ENCODE measurements at regions of chr7 and their contacts with region 1.

Region 1: GRCh38 chr7:126803060-126803665 is 449.6 kb downstream of the GRM8 start:
- DNase-seq: peak; percentile 53
- ATAC-seq: peak; percentile 98
- H3K4me3 ChIP-seq: no peak overlapping the region
- H3K27ac ChIP-seq: no peak overlapping the region
- H3K4me1 ChIP-seq: no peaks in the 10 kb centered on the region
- H3K27me3 ChIP-seq: no peaks in the 10 kb centered on the region
- CTCF ChIP-seq: peak; percentile 63 to 78 (median 73)
- EP300 ChIP-seq: no peak
- POLR2A ChIP-seq: no peak
- RAD21 ChIP-seq: peak; percentile 86

Region 2: DNA sequence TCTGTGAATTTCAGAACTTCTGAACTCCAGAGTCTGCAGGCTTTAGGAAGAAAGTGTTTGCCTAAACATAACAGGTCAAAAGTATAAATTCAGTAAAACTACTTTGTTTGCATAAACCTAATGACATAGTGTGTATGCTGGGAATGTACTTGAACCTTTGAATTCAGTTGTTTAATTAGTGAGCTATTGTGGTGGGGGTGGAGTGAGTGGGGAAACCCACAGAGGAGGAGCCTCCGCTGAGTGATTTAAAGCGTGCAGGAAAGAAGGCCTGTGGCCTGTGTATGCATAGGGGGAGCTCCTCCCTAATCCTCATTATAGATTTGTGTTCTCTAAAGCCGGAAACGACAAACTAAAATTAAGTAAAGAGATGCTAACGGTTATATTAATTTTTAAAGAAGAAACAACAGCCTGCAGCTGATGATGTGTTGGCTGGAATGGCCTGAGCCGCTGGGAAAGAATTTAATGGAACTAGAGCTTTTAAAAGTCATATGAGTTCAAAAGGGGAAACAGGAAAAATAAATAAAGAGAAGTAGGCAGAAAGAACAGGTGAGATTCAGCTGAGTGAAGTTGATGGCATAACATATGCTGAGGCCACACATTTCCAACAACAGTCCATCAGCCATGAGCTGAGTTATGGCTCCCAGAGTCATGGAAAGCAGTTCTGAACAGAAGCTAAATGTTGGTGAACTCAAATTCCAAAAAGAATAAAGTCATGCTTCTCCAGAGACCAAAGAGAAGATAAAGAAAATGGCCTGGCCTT is 145.4 kb before region 1 on chr7:
- CTCF ChIA-PET with region 1: interaction called, 5 read pairs
- POLR2A ChIA-PET with region 1: no interaction called
- RAD21 ChIA-PET with region 1: interaction called, 5 read pairs
- SMC1A ChIA-PET with region 1: interaction called, 11 read pairs
- in situ Hi-C with region 1: no loop called
- intact Hi-C with region 1: loop called (anchors 5 kb)
- DNase-seq: peak; percentile 77
- ATAC-seq: peak; percentile 95
- H3K4me3 ChIP-seq: no peak overlapping the region
- H3K27ac ChIP-seq: peak overlapping the region; percentile 93
- H3K4me1 ChIP-seq: peaks cover 21% of the 10 kb centered on the region
- H3K27me3 ChIP-seq: no peaks in the 10 kb centered on the region
- CTCF ChIP-seq: no peak
- EP300 ChIP-seq: peak; percentile 65 to 90; a peak in 2 of 4 replicates
- POLR2A ChIP-seq: no peak
- RAD21 ChIP-seq: no peak; the same call in 1 of the 2 replicates

Region 3: DNA sequence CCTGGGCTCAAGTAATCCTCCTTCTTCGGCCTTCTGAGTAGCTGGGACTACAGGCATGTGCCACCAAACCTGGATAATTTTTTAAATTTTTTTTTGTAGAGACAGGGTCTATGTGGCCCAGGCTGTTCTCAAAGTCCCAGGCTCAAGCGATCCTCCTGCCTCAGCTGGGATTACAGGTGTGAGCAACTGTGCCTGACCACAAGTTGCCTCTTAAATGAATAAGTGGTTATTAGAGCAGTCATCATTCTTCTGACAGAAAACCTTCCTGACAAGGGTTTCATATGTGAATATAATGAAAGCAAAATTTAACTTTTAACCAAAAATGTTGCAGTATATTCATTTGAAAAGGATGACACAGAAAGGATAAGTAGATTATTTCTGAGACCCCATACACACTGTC is 82.9 kb before region 1 on chr7:
- CTCF ChIA-PET with region 1: no interaction called
- POLR2A ChIA-PET with region 1: interaction called, 4 read pairs
- RAD21 ChIA-PET with region 1: interaction called, 3 read pairs
- SMC1A ChIA-PET with region 1: interaction called, 22 read pairs
- in situ Hi-C with region 1: no loop called
- intact Hi-C with region 1: no loop called
- DNase-seq: no peak
- ATAC-seq: peak; percentile 91
- H3K4me3 ChIP-seq: no peak overlapping the region
- H3K27ac ChIP-seq: peak overlapping the region; percentile 46; the same call in 1 of the 2 replicates
- H3K4me1 ChIP-seq: peaks cover 11% of the 10 kb centered on the region
- H3K27me3 ChIP-seq: no peaks in the 10 kb centered on the region
- CTCF ChIP-seq: no peak
- EP300 ChIP-seq: peak; percentile 29 to 54; a peak in 2 of 4 replicates
- POLR2A ChIP-seq: no peak
- RAD21 ChIP-seq: no peak

Region 4: GRCh38 chr7:126790763-126791162 is 12.4 kb before region 1 on chr7:
- CTCF ChIA-PET with region 1: interaction called, 50 read pairs
- POLR2A ChIA-PET with region 1: no interaction called
- RAD21 ChIA-PET with region 1: no interaction called
- SMC1A ChIA-PET with region 1: interaction called, 4 read pairs
- in situ Hi-C with region 1: no loop called
- intact Hi-C with region 1: no loop called
- DNase-seq: no peak
- ATAC-seq: no peak
- H3K4me3 ChIP-seq: no peak overlapping the region
- H3K27ac ChIP-seq: no peak overlapping the region
- H3K4me1 ChIP-seq: no peaks in the 10 kb centered on the region
- H3K27me3 ChIP-seq: no peaks in the 10 kb centered on the region
- CTCF ChIP-seq: 0 out of 6 replicates have a peak, but pooled peaks of 2 of the 3 experiments have one; percentile 5 to 10
- EP300 ChIP-seq: no peak
- POLR2A ChIP-seq: no peak
- RAD21 ChIP-seq: 0 out of 2 replicates have a peak, but pooled peaks have one; percentile 10

Region 5: GRCh38 chr7:126979722-126980121 is 176.6 kb after region 1 on chr7:
- CTCF ChIA-PET with region 1: no interaction called
- POLR2A ChIA-PET with region 1: no interaction called
- RAD21 ChIA-PET with region 1: no interaction called
- SMC1A ChIA-PET with region 1: no interaction called
- in situ Hi-C with region 1: no loop called
- intact Hi-C with region 1: no loop called
- DNase-seq: no peak
- ATAC-seq: no peak
- H3K4me3 ChIP-seq: no peak overlapping the region
- H3K27ac ChIP-seq: no peak overlapping the region
- H3K4me1 ChIP-seq: no peaks in the 10 kb centered on the region
- H3K27me3 ChIP-seq: no peaks in the 10 kb centered on the region; a peak in 1 of 4 replicates
- CTCF ChIP-seq: no peak
- EP300 ChIP-seq: no peak
- POLR2A ChIP-seq: no peak
- RAD21 ChIP-seq: no peak

Region 6: GRCh38 chr7:127158659-127159058 is 355.5 kb after region 1 on chr7:
- CTCF ChIA-PET with region 1: interaction called, 5 read pairs
- POLR2A ChIA-PET with region 1: no interaction called
- RAD21 ChIA-PET with region 1: no interaction called
- SMC1A ChIA-PET with region 1: no interaction called
- in situ Hi-C with region 1: no loop called
- intact Hi-C with region 1: loop called (anchors 10 kb)
- DNase-seq: no peak
- ATAC-seq: peak; percentile 74
- H3K4me3 ChIP-seq: no peak overlapping the region
- H3K27ac ChIP-seq: no peak overlapping the region
- H3K4me1 ChIP-seq: no peaks in the 10 kb centered on the region
- H3K27me3 ChIP-seq: no peaks in the 10 kb centered on the region
- CTCF ChIP-seq: peak; percentile 39 to 55 (median 40); a peak in 5 of 6 replicates
- EP300 ChIP-seq: no peak
- POLR2A ChIP-seq: no peak
- RAD21 ChIP-seq: no peak

Region 7: DNA sequence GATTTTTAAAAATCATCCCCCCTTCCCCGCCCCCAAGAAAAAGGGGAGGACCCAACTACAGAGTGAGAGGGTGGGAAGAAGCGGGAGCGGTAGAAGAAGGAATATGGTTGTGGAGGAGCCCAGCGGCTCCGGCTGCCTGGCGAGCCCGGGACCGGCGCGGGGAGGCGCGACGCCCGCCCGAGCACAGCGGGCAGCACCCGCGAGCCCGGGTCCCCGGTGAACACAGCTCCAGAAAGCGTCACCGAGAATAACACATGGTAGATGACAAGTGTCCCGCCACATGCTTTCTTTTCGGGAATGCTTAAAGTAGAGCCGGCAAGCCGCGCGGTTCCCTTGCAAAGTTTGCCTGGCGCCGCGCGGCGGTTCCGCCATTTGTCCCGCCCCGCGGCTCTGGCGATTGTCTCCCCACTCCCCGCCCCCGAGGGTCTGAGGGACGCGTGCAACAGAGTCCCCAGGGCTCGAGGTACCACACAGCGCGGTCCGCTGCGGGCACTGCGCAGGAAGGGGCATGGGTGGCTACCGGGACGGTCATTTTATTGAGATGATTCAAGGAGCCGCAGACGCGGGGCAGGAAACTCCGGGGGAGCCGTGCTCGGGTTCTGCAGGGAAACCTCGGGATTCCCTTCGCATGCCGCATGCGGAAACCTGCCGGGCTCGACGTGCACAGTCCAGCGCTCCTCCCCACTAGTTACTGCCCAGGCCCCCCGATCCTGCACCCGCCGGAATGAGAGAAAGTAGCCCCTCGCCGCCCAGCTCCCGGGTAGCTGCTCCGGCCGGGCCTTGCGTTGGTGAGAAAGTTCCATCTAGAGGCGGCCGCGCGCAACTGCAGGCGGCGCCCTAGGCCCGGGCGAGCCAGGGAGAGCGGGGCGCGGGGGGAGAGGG is 450.4 kb after region 1 on chr7:
- CTCF ChIA-PET with region 1: interaction called, 5 read pairs
- POLR2A ChIA-PET with region 1: no interaction called
- RAD21 ChIA-PET with region 1: interaction called, 19 read pairs
- SMC1A ChIA-PET with region 1: interaction called, 3 read pairs
- in situ Hi-C with region 1: no loop called
- intact Hi-C with region 1: loop called (anchors 1 kb)
- DNase-seq: no peak
- ATAC-seq: peak; percentile 94
- H3K4me3 ChIP-seq: peak overlapping the region; percentile 76
- H3K27ac ChIP-seq: no peak overlapping the region
- H3K4me1 ChIP-seq: peaks cover 10% of the 10 kb centered on the region
- H3K27me3 ChIP-seq: peaks cover 5 to 31% of the 10 kb centered on the region in 2 experiments
- CTCF ChIP-seq: peak; percentile 77 to 97 (median 87)
- EP300 ChIP-seq: no peak
- POLR2A ChIP-seq: no peak
- RAD21 ChIP-seq: peak; percentile 71

Region 8: GRCh38 chr7:128791121-128791961 is 1988.2 kb after region 1 on chr7:
- CTCF ChIA-PET with region 1: no interaction called
- POLR2A ChIA-PET with region 1: no interaction called
- RAD21 ChIA-PET with region 1: no interaction called
- SMC1A ChIA-PET with region 1: no interaction called
- in situ Hi-C with region 1: no loop called
- intact Hi-C with region 1: no loop called
- DNase-seq: no peak
- ATAC-seq: peak; percentile 93
- H3K4me3 ChIP-seq: peak overlapping the region; percentile 87
- H3K27ac ChIP-seq: no peak overlapping the region
- H3K4me1 ChIP-seq: peaks cover 3% of the 10 kb centered on the region; the same call in 1 of the 2 replicates
- H3K27me3 ChIP-seq: peaks cover 2% of the 10 kb centered on the region in 2 experiments; a peak in 2 of 4 replicates
- CTCF ChIP-seq: no peak
- EP300 ChIP-seq: no peak
- POLR2A ChIP-seq: peak; percentile 49; the same call in 1 of the 2 replicates
- RAD21 ChIP-seq: no peak